Prostate gland (tissue), 2 donors: ENCODE measurements at regions of chr5 and their contacts with region 1.

Region 1: GRCh38 chr5:132007399-132008165 is 3.9 kb downstream of the ACSL6 start:
- DNase-seq: peak; percentile 77
- H3K4me3 ChIP-seq: no peak overlapping the region
- H3K27ac ChIP-seq: no peak overlapping the region
- H3K4me1 ChIP-seq: no peaks in the 10 kb centered on the region
- H3K27me3 ChIP-seq: no peaks in the 10 kb centered on the region
- CTCF ChIP-seq: peak; percentile 45 to 85 (median 80)
- POLR2A ChIP-seq: no peak

Region 2: GRCh38 chr5:131423056-131423455 is 584.5 kb before region 1 on chr5:
- intact Hi-C with region 1: loop called (anchors 10 kb)
- DNase-seq: no peak
- H3K4me3 ChIP-seq: no peak overlapping the region
- H3K27ac ChIP-seq: no peak overlapping the region
- H3K4me1 ChIP-seq: no peaks in the 10 kb centered on the region
- H3K27me3 ChIP-seq: no peaks in the 10 kb centered on the region
- CTCF ChIP-seq: peak in 2 of 4 experiments; percentile 12 to 34
- POLR2A ChIP-seq: no peak

Region 3: GRCh38 chr5:131589510-131590348 is 417.9 kb before region 1 on chr5:
- intact Hi-C with region 1: loop called (anchors 1 kb)
- DNase-seq: no peak
- H3K4me3 ChIP-seq: no peak overlapping the region
- H3K27ac ChIP-seq: no peak overlapping the region
- H3K4me1 ChIP-seq: no peaks in the 10 kb centered on the region
- H3K27me3 ChIP-seq: no peaks in the 10 kb centered on the region
- CTCF ChIP-seq: peak in 3 of 4 experiments; percentile 81 to 87 (median 82)
- POLR2A ChIP-seq: no peak

Region 4: DNA sequence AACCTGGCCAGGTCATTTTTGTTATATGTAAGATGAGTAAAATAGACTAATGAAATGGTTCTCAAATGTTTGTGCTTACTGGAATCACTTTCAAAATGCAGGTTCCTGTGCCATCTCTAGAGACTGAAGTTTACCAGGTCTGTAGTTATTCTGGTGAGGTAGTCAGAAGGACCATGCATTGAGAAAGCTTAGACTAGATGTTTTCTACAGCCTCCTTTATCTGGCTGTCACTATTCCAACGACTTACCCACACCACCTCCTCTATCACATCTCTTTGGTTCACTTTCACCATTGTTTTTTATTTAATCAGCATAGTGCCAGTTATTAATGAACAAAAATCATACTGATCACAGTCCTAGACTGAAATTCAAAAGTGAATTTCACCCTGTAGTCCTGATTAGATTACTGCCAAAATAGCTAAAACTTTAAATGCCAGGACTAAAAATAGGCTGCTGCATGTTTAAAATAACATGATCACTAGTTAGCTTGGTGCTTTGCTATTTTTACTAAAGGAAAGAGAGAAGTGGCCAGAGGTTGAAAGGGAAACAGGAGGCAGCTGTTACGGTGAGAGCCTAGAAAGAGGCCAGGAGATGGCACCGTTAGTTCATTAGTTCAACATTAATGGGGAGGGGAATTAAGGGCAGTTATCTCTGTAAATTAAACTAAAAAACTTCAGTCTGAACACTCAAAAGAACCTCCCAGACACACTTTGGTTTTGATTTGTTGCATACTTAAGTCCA is 196.9 kb before region 1 on chr5:
- intact Hi-C with region 1: loop called (anchors 5 kb)
- DNase-seq: no peak
- H3K4me3 ChIP-seq: no peak overlapping the region
- H3K27ac ChIP-seq: no peak overlapping the region
- H3K4me1 ChIP-seq: no peaks in the 10 kb centered on the region
- H3K27me3 ChIP-seq: no peaks in the 10 kb centered on the region
- CTCF ChIP-seq: no peak
- POLR2A ChIP-seq: no peak

Region 5: DNA sequence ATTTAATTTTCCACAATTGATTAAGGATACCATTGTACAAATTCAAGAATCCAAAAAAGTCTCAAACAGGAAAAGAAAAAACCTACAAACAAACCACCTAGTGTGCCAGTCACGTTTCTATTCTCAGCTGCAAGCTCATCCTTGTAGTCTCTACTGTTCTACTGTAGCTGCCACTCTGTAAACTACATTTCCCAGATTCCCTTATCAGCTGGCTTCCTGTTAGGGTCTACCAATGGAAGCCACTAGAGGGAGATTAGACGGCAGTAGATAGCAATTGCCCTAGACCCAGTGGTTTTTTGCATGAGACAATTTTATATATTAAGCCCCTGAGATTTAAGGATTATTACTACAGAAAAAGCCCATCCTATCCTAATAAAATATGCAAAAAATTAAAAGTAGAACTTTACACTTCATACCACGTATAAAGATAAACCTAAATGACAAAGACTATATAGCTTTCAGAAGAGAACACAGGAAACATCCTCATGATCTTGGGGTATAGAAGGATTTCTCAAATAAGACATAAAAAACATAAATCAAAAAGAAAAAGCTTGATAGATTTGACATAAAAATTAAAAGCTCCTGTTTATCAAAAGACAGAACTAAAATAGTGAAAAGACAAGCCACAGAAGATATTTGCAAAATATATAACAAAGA is 182.7 kb after region 1 on chr5:
- intact Hi-C with region 1: no loop called
- DNase-seq: peak; percentile 20
- H3K4me3 ChIP-seq: no peak overlapping the region
- H3K27ac ChIP-seq: no peak overlapping the region
- H3K4me1 ChIP-seq: no peaks in the 10 kb centered on the region
- H3K27me3 ChIP-seq: no peaks in the 10 kb centered on the region
- CTCF ChIP-seq: peak in 3 of 4 experiments; percentile 48 to 66 (median 60)
- POLR2A ChIP-seq: no peak